Activated T-helper 2 cell treated with anti-CD3 and anti-CD28 coated beads, Interferon-gamma antibody, Interleukin-2, Interleukin-4, amounts not matched to agents 10 μg/mL and 5 μg/mL and 100 μg/mL, durations not matched to agents 14 hours and 24 hours and 36 hours (primary cell): ENCODE measurements at regions of chr17 and their contacts with region 1.

Region 1: GRCh38 chr17:59361916-59362810 is 30.7 kb downstream of the YPEL2 start:
- DNase-seq: peak; percentile 49
- H3K4me3 Mint-ChIP-seq: peak overlapping the region; percentile 72
- H3K27ac Mint-ChIP-seq: peak overlapping the region; percentile 95
- H3K4me1 Mint-ChIP-seq: peaks cover 65% of the 10 kb centered on the region
- H3K27me3 Mint-ChIP-seq: no peaks in the 10 kb centered on the region

Region 2: GRCh38 chr17:59329638-59330313 is 32.4 kb before region 1 on chr17:
- intact Hi-C with region 1: loop called (anchors 1 kb)
- DNase-seq: peak; percentile 36
- H3K4me3 Mint-ChIP-seq: peak overlapping the region; percentile 63
- H3K27ac Mint-ChIP-seq: peak overlapping the region; percentile 73
- H3K4me1 Mint-ChIP-seq: peaks cover 40% of the 10 kb centered on the region
- H3K27me3 Mint-ChIP-seq: peaks cover 9% of the 10 kb centered on the region

Region 3: DNA sequence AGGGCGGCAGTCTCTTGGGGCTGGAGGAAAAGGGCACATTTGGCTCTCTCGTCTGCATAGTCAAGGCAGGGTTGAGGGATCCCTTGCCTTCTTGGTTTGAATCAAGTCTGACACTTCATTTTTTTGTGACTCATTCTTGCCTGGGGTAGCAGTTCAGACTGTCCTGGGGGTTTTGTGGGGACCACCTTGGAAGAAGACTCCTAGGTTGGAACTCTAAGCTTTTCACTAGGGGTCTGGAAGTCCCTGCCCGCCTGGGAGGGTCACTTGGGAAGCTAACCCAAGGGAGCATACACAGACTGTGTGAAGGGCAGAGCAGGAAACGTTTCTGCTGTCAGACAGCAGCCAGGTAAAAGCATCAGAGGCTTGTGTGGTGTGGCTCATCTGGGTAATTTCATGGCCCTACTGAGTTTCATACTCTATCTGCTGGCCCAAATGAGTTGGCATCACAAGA is 19.5 kb before region 1 on chr17:
- intact Hi-C with region 1: loop called (anchors 1 kb)
- DNase-seq: no peak
- H3K4me3 Mint-ChIP-seq: no peak overlapping the region
- H3K27ac Mint-ChIP-seq: peak overlapping the region; percentile 68
- H3K4me1 Mint-ChIP-seq: peaks cover 21% of the 10 kb centered on the region
- H3K27me3 Mint-ChIP-seq: no peaks in the 10 kb centered on the region

Region 4: DNA sequence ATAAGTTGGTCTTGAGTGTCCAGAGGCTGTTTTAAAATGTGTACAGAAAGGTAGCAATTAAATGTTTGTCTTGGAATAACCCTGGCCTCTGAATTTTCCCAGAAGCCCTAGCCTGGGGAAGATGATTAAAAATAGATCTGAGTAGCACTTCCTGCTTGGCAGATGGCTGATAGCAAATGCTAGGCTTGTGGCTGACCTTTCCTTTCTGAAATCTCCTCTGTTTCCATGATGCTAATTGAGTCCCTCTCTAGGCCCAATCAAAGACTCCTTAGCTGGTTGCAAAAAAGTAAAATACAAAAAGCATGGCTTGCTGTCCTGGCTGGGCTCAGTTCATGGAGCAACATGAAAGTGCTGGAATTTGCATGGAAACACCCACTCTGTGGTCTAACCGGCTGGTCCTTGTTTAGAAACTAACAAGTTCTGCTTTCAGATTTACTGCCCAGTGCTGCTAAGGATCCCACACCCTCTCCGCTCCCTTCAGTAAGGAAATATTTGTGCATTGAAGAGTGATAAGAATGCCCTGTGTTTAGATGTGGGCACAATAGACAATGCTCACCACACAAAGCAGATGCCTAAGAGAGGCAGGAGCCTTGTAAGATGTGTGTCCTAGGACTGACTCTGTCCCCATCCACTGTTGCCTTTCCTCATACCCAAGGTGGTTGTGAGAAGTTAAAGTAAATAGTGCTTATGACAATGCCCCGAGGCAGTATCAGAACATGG is 10.1 kb after region 1 on chr17:
- intact Hi-C with region 1: loop called (anchors 1 kb)
- DNase-seq: no peak
- H3K4me3 Mint-ChIP-seq: peak overlapping the region; percentile 2
- H3K27ac Mint-ChIP-seq: peak overlapping the region; percentile 84
- H3K4me1 Mint-ChIP-seq: peaks cover 61% of the 10 kb centered on the region
- H3K27me3 Mint-ChIP-seq: no peaks in the 10 kb centered on the region

Region 5: DNA sequence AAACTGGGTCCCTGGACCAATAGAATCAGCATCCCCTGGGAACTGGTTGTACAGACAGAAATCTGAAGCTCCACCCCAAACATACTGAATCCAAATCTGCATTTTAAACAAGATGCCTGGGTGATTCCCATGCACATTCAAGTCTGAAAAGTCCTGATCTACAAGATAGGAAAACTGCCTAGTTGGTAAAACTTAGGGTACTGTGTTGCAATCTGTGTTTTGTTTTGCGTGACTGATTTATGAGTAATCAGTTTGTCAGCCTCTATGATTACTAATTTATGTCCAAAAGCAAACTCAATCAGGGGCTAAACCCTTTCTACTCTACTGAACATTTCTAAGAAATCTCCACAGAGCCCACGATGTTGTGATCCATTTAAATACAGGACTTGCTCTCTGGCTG is 73.1 kb after region 1 on chr17:
- intact Hi-C with region 1: loop called (anchors 1 kb)
- DNase-seq: no peak
- H3K4me3 Mint-ChIP-seq: no peak overlapping the region
- H3K27ac Mint-ChIP-seq: peak overlapping the region; percentile 83
- H3K4me1 Mint-ChIP-seq: peaks cover 63% of the 10 kb centered on the region
- H3K27me3 Mint-ChIP-seq: no peaks in the 10 kb centered on the region

Region 6: DNA sequence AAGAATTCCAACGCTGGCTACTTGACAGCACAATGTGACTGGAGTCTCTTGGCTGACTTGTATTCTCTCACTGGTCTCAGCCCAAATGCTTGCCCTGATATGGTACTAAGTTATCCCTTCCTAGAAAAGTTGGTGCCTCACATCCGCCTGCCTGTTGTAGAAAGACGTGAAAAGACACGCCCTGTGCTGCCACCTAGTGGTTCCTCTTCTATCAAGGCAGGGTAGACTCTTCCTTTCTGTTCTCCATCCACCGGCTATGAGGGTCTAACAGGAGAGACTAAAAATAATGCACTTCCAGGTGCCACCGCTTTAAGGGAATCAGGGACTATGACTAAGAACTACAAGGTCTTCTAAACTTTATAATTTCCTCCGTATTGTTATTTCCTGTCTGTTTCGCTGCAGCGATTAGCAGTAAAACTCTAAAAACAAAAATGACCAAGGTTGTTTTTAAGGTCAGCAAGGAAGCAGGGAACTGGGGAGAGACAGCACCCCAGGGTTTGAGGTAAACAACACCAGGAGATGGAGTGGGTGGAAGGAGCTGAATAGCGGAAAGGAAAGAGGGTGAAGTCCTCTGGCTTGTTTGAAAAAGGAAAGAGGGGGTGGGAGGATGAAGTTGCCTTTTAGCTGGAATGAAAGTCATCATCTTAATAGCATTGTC is 78.8 kb after region 1 on chr17:
- intact Hi-C with region 1: loop called (anchors 1 kb)
- DNase-seq: peak; percentile 79
- H3K4me3 Mint-ChIP-seq: peak overlapping the region; percentile 60
- H3K27ac Mint-ChIP-seq: peak overlapping the region; percentile 87
- H3K4me1 Mint-ChIP-seq: peaks cover 55% of the 10 kb centered on the region
- H3K27me3 Mint-ChIP-seq: no peaks in the 10 kb centered on the region